T-cell (primary cell): ENCODE measurements at regions of chr1 and their contacts with region 1.

Region 1: DNA sequence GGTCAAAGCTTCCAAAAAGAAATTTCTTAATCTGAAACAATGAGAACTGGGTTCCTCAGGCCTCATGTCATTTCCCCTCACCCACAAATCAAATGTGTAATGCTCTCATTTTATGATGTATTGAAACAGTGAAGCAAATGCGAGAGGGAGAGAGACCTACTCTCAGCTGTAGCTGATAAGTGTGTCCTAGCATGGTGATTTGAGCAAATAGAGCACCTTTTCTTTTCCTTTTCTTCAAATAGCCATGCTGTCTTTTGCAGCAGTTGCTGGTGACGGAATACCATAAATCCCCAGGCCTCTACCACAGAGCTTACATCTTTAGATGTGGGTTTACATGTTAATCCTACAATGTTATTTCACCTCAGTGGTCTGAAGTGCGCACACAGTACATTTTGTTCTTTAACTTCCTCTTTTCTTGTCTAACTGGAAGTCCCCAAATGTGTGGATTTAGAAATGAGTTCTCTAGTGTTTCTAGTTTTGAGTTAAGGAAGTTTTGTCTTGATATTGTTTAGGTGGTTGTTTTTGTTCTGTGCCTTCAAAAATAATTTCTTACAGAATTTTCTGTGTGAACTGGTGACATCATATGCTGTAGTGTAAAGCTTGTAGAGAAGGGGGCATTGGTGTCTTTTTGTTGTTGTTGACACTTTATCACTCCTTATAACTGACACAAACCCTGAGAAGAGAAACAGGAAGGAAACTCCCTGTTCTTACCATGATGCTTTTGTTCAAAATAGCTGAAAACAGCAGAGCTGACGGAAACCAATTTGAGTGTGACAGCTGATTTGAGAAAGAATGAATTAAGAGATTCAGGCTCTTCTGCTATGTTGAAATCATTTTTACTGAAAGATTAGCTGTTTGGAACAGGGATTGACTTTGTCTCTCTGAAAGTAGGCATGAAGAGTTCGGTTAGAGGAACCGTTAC is 12.2 kb downstream of the SMAP2 start:
- DNase-seq: peak in 33 of 35 experiments; percentile 31 to 93 (median 70)
- ATAC-seq: peak; percentile 75 to 81 (median 76)
- H3K4me3 ChIP-seq: peak overlapping the region; percentile 30 to 62
- H3K4me3 Mint-ChIP-seq: peak overlapping the region; percentile 79 to 89 (median 86)
- H3K27ac ChIP-seq: peak overlapping the region; percentile 96
- H3K27ac Mint-ChIP-seq: peak overlapping the region; percentile 99 to 100
- H3K4me1 ChIP-seq: peaks cover 84% of the 10 kb centered on the region in 2 experiments
- H3K4me1 Mint-ChIP-seq: peaks cover 88 to 96% (median 95%) of the 10 kb centered on the region in 3 donors
- H3K27me3 ChIP-seq: no peaks in the 10 kb centered on the region
- H3K27me3 Mint-ChIP-seq: no peaks in the 10 kb centered on the region

Region 2: GRCh38 chr1:40373338-40374283 is 12.1 kb before region 1 on chr1 and contains the start of gene SMAP2:
- CTCF ChIA-PET with region 1: interaction called in 1 of 2 experiments, 64 read pairs
- POLR2A ChIA-PET with region 1: interaction called, 41 to 141 read pairs
- DNase-seq: peak; percentile 87 to 98 (median 95)
- ATAC-seq: peak; percentile 86 to 91 (median 88)
- H3K4me3 ChIP-seq: peak within 1 kb of the TSS; percentile 99
- H3K4me3 Mint-ChIP-seq: peak within 1 kb of the TSS; percentile 89 to 100 (median 98)
- H3K27ac ChIP-seq: peak within 1 kb of the TSS; percentile 99
- H3K27ac Mint-ChIP-seq: peak within 1 kb of the TSS; percentile 95 to 98
- H3K4me1 ChIP-seq: peaks cover 26 to 32% of the 10 kb centered on the region in 2 experiments
- H3K4me1 Mint-ChIP-seq: peaks cover 59 to 61% (median 59%) of the 10 kb centered on the region in 3 donors
- H3K27me3 ChIP-seq: no peaks in the 10 kb centered on the region
- H3K27me3 Mint-ChIP-seq: no peaks in the 10 kb centered on the region
- total RNA-seq, gene SMAP2: 120 to 254 (median 123) TPM

Region 3: DNA sequence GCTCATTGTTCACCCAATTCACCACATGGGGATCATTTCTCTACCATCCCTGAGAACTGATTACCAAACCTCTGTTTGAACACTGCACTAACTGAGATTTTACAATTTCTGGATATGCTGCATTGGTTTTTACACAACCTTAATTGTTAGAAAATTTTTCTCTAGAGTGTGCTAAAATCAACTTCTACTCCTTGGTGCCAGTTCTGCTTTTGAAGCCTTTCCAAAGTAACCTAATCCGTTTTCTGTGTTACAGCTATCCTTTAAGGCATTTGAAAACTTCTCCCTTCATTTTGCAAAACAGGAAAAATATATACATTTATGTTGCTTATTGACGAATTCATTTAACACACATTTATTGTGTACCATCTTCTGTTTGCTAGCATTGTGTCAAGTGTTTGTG is 11.6 kb after region 1 on chr1:
- CTCF ChIA-PET with region 1: interaction called, 4 to 13 read pairs
- POLR2A ChIA-PET with region 1: interaction called, 32 to 50 read pairs
- DNase-seq: no peak
- ATAC-seq: no peak
- H3K4me3 ChIP-seq: no peak overlapping the region
- H3K4me3 Mint-ChIP-seq: peak overlapping the region; percentile 58 to 93 (median 65)
- H3K27ac ChIP-seq: peak overlapping the region; percentile 96
- H3K27ac Mint-ChIP-seq: peak overlapping the region; percentile 92 to 94
- H3K4me1 ChIP-seq: peaks cover 65 to 71% of the 10 kb centered on the region in 2 experiments
- H3K4me1 Mint-ChIP-seq: peaks cover 93 to 95% (median 94%) of the 10 kb centered on the region in 3 donors
- H3K27me3 ChIP-seq: no peaks in the 10 kb centered on the region
- H3K27me3 Mint-ChIP-seq: no peaks in the 10 kb centered on the region

Region 4: DNA sequence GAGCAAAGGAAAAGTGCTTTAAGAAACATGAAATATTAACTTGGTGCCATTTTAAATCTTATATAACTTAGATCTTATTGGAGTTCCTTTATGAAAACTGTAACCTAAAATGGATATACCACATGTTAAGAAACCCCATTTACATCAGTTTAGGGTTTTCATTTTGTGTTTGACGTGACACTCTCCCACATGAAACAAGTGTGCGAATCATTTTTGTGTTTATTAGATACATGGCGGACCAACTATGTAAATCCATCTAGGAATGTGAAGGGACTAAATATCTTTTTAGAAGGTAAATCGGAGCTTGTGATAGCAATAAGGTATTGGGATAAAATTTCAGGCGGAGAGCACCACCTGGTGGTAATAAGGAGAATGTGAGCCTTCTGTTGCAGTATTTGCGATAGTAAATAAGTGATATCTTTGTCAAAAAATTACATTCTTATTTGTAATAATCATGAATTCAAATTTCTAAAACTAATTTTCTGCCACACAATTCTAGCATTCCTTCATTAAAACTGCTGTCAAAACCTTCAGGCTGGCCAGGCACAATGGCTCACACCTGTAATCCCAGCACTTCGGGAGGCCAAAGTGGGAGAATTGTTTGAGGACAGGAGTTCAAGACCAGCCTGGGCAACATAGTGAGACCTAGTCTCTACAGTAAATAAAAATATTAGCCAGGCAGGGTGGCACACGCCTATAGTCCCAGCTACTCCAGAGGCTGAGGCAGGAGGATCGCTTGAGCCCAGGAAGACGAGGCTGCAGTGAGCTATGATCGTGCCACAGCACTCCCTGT is 19.2 kb after region 1 on chr1:
- CTCF ChIA-PET with region 1: interaction called, 3 to 36 read pairs
- POLR2A ChIA-PET with region 1: interaction called, 18 to 32 read pairs
- DNase-seq: peak in 21 of 35 experiments; percentile 18 to 87 (median 48)
- ATAC-seq: peak; percentile 62 to 82 (median 70)
- H3K4me3 ChIP-seq: no peak overlapping the region
- H3K4me3 Mint-ChIP-seq: peak overlapping the region; percentile 44 to 57 (median 49)
- H3K27ac ChIP-seq: peak overlapping the region; percentile 87
- H3K27ac Mint-ChIP-seq: peak overlapping the region; percentile 75 to 88
- H3K4me1 ChIP-seq: peaks cover 30 to 44% of the 10 kb centered on the region in 2 experiments
- H3K4me1 Mint-ChIP-seq: peaks cover 76 to 82% (median 79%) of the 10 kb centered on the region in 3 donors
- H3K27me3 ChIP-seq: no peaks in the 10 kb centered on the region
- H3K27me3 Mint-ChIP-seq: no peaks in the 10 kb centered on the region

Region 5: GRCh38 chr1:40432644-40433390 is 47.1 kb after region 1 on chr1:
- CTCF ChIA-PET with region 1: no interaction called
- POLR2A ChIA-PET with region 1: no interaction called
- DNase-seq: no peak
- ATAC-seq: no peak
- H3K4me3 ChIP-seq: no peak overlapping the region
- H3K4me3 Mint-ChIP-seq: no peak overlapping the region
- H3K27ac ChIP-seq: no peak overlapping the region
- H3K27ac Mint-ChIP-seq: no peak overlapping the region
- H3K4me1 ChIP-seq: no peaks in the 10 kb centered on the region
- H3K4me1 Mint-ChIP-seq: peaks cover 0 to 2% (median 0%) of the 10 kb centered on the region in 3 donors
- H3K27me3 ChIP-seq: no peaks in the 10 kb centered on the region
- H3K27me3 Mint-ChIP-seq: no peaks in the 10 kb centered on the region

Region 6: GRCh38 chr1:40462956-40463590 is 77.4 kb after region 1 on chr1:
- CTCF ChIA-PET with region 1: no interaction called
- POLR2A ChIA-PET with region 1: interaction called in 1 of 2 experiments, 10 read pairs
- DNase-seq: peak in 1 of 35 experiments; percentile 11
- ATAC-seq: no peak
- H3K4me3 ChIP-seq: no peak overlapping the region
- H3K4me3 Mint-ChIP-seq: no peak overlapping the region
- H3K27ac ChIP-seq: no peak overlapping the region
- H3K27ac Mint-ChIP-seq: no peak overlapping the region
- H3K4me1 ChIP-seq: no peaks in the 10 kb centered on the region
- H3K4me1 Mint-ChIP-seq: no peaks in the 10 kb centered on the region
- H3K27me3 ChIP-seq: no peaks in the 10 kb centered on the region
- H3K27me3 Mint-ChIP-seq: no peaks in the 10 kb centered on the region